ENCODE measurements at regions of chr19 and their contacts with region 1.

Region 1: DNA sequence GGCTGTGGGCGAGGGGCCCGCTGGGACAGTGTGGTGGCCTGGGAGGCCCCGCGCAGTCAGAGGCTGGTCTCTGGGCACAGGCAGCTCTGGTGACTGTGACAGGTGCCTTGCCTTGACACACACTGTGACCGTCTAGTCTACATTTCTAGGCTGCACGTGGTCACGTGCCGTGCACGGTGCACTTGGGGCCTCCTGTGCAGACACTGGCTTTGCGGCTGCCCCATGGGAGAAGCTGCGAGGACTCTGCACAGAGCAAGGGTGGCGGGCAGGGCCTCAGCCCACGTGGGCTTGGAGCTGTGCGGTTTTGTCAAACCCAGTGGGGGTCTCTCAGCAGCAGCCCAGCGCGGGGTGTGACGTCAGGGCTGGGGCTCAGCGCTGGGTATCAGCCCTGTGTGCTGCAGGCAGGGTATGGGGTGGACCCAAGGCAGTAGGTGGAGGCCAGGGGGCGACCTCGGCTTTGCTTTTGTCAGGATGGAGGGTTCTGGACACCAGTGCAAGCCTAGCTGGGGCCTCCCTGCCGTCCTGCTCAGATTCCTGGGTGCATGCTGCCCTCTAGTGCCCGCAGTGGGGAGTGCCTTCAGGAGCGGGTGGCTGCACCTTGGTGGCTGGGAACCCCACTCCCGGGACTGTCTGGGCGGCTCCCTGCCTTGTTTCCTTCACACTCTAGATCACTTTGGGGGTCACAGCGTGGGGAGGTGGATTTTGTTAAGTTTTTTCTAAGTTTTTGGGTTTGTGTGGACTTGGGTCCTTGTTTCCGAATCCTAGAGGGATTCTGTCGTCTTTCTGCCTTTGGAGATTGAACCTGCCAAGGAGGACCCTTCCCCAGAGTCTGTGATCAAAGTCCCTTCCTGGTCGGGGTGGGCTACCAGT is 62.6 kb downstream of the KDM4B start:
- ATAC-seq: peak; percentile 88 to 96 (median 92)
- H3K4me3 ChIP-seq: no peak overlapping the region
- H3K27ac ChIP-seq: peak overlapping the region; percentile 32 to 50
- H3K4me1 ChIP-seq: peaks cover 14% of the 10 kb centered on the region in 2 donors

Region 2: GRCh38 chr19:4803736-4804695 is 227.4 kb before region 1 on chr19:
- in situ Hi-C with region 1: loop called in 2 of 9 experiments (anchors 10 to 25 kb)
- ATAC-seq: peak; percentile 59 to 95 (median 78)
- H3K4me3 ChIP-seq: no peak overlapping the region
- H3K27ac ChIP-seq: no peak overlapping the region
- H3K4me1 ChIP-seq: no peaks in the 10 kb centered on the region

Region 3: GRCh38 chr19:4815426-4816201 is 215.9 kb before region 1 on chr19:
- in situ Hi-C with region 1: loop called in 2 of 9 experiments (anchors 10 to 25 kb)
- ATAC-seq: peak; percentile 12 to 95 (median 92)
- H3K4me3 ChIP-seq: peak overlapping the region; percentile 12 to 26 (median 21)
- H3K27ac ChIP-seq: peak overlapping the region; percentile 76 to 85
- H3K4me1 ChIP-seq: peaks cover 4 to 5% of the 10 kb centered on the region in 2 donors

Region 4: DNA sequence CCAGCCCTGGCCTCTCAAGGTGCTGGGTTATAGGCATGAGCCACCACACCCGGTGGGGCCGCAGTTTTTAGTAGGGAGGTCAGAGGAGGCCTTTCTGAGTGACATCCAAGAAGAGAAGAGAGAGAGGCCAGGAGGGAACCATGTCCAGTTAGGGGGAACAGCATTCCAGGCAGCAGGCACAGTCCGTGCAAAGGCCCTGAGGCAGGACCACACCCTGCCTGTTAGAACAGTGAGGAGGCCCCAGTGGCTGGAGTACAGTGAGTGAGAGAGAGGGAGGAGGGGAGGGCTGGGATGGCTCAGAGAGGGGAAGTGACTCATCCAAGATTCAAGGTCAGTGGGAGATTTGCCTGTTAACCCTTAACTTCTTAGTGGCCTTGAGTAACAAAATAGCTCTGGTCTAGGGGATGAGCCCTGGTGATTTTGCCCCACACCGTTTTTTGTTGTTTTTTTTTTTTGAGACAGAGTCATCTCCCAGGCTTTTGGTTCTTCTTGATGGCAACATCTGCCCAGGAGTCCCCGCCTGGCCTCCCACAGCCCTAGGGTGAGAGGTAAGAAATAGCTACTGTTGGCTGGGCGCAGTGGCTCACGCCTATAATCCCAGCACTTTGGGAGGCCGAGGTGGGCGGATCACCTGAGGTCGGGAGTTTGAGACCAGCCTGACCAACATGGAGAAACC is 161.3 kb before region 1 on chr19:
- in situ Hi-C with region 1: loop called in 1 of 9 experiments (anchors 10 kb)
- ATAC-seq: peak in 3 of 8 experiments; percentile 53 to 60 (median 58)
- H3K4me3 ChIP-seq: no peak overlapping the region
- H3K27ac ChIP-seq: no peak overlapping the region
- H3K4me1 ChIP-seq: no peaks in the 10 kb centered on the region